ENCODE measurements at regions of chr2 and their contacts with region 1.

Region 1: DNA sequence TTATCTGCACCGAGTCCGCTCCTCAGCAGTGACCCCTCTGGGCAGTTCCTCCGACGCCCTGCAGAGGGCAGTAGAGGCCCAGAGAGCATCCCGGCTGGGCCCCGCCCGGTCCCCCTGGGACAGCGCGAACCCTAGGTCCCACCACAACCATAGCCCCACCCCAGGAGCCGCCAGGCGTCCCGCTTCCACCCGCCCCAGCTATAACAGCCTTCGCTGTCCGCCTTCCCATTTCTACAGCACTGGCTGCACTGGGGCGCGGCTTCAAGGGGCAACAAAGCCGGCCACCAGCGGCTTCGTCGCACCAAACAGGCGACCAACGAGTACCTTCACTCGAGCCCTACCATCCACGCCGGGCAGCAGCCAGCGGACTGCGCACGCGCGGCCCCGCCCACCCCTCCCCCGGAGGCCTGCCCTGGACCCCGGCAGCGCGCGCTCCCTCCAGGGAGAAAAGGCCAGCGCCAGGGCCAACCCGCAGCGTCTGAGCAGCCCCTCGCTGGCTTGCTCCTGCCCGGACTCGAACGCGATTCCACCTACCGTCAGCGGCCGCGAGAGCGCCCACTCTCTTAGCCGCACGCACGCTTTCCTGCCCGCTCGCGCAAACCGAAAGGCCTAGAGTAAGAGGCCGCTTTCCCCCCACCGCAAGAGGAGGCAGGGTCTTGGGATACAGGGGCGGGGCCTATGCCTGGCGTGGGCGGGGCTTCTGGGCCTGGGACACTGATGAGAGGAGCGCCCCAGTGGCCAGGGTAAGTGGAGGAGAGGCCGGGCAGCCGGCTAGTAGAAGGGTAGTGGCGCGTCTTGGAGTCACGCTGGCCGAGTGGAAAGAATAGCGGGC is at the start of gene NHEJ1:
- DNase-seq: peak; percentile 83 to 97 (median 92)
- ATAC-seq: peak; percentile 88
- H3K4me3 ChIP-seq: peak within 1 kb of the TSS; percentile 59 to 77
- H3K4me3 Mint-ChIP-seq: peak within 1 kb of the TSS; percentile 93
- H3K27ac ChIP-seq: peak within 1 kb of the TSS; percentile 60 to 69
- H3K27ac Mint-ChIP-seq: peak within 1 kb of the TSS; percentile 95
- H3K4me1 ChIP-seq: peaks cover 11% of the 10 kb centered on the region
- H3K4me1 Mint-ChIP-seq: peaks cover 16% of the 10 kb centered on the region
- H3K27me3 ChIP-seq: no peaks in the 10 kb centered on the region
- H3K27me3 Mint-ChIP-seq: no peaks in the 10 kb centered on the region
- CTCF ChIP-seq: peak; percentile 97
- total RNA-seq, gene NHEJ1: 7.2 to 8.1 TPM

Region 2: DNA sequence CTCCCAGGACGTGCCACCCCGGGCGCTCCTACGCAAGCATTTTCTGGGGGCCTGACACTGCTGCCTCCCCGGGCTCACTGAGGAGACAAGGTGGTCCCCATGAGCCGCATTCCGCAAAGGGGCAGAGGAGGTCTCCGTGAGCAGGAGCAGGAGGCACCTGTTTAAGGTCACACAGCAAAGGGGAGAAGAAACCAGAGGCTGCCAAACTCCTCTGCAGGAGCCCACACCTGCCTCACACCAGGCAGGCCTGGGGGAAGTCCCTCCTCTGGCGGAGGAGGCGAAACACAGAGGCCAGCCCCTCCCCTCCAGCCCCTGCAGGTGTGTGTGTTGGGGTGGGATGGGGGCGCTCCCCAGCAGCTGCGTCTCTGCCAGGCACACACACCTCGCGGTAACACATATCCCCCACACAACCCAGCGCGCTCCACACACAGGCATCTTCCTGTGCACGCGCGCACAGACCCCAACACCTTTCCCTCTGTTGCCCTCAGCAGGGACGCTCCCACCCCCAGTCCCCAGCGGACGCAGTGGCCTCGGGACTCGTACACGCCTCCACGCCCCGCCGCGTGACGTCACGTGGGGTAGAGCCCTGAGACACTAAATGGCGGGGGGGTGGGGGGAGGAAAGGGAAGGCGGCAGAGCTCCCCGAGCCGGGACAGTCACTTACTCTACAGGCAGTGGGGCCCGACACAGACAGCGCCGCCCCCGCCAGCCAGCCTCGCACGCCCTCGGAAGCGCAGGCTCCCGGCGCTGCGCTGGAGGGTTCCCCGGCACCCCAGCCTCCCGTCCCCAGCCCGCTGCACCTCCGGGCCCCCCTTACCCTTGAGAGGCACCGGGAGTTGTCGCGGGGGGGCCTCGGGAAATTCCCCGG is 280.3 kb before region 1 on chr2:
- CTCF ChIA-PET with region 1: no interaction called
- POLR2A ChIA-PET with region 1: no interaction called
- intact Hi-C with region 1: no loop called
- DNase-seq: peak; percentile 74 to 97 (median 88)
- ATAC-seq: peak; percentile 81
- H3K4me3 ChIP-seq: peak overlapping the region; percentile 53 to 61
- H3K4me3 Mint-ChIP-seq: peak overlapping the region; percentile 90
- H3K27ac ChIP-seq: peak overlapping the region; percentile 50 to 57
- H3K27ac Mint-ChIP-seq: peak overlapping the region; percentile 95
- H3K4me1 ChIP-seq: peaks cover 59% of the 10 kb centered on the region
- H3K4me1 Mint-ChIP-seq: peaks cover 51% of the 10 kb centered on the region
- H3K27me3 ChIP-seq: peaks cover 0 to 15% of the 10 kb centered on the region in 2 experiments
- H3K27me3 Mint-ChIP-seq: peaks cover 10% of the 10 kb centered on the region
- CTCF ChIP-seq: no peak

Region 3: DNA sequence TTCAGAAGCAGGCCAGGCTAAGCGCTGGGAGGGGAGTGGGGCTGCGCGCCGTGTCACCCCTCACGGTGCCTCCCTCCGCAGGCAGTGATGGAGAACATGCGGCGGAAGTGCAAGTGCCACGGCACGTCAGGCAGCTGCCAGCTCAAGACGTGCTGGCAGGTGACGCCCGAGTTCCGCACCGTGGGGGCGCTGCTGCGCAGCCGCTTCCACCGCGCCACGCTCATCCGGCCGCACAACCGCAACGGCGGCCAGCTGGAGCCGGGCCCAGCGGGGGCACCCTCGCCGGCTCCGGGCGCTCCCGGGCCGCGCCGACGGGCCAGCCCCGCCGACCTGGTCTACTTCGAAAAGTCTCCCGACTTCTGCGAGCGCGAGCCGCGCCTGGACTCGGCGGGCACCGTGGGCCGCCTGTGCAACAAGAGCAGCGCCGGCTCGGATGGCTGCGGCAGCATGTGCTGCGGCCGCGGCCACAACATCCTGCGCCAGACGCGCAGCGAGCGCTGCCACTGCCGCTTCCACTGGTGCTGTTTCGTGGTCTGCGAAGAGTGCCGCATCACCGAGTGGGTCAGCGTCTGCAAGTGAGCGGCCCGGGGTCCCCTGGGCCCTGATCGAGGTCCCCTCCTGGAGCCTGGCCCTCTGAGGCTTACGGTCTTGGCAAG is 267.6 kb before region 1 on chr2:
- CTCF ChIA-PET with region 1: no interaction called
- POLR2A ChIA-PET with region 1: no interaction called
- intact Hi-C with region 1: loop called in 1 of 2 experiments (anchors 5 kb)
- DNase-seq: peak; percentile 71 to 97 (median 85)
- ATAC-seq: peak; percentile 65
- H3K4me3 ChIP-seq: peak overlapping the region; percentile 36 to 51
- H3K4me3 Mint-ChIP-seq: peak overlapping the region; percentile 72
- H3K27ac ChIP-seq: peak overlapping the region; percentile 68 to 84
- H3K27ac Mint-ChIP-seq: peak overlapping the region; percentile 95
- H3K4me1 ChIP-seq: peaks cover 61% of the 10 kb centered on the region
- H3K4me1 Mint-ChIP-seq: peaks cover 44% of the 10 kb centered on the region
- H3K27me3 ChIP-seq: peaks cover 0 to 7% of the 10 kb centered on the region in 2 experiments
- H3K27me3 Mint-ChIP-seq: no peaks in the 10 kb centered on the region
- CTCF ChIP-seq: peak; percentile 67

Region 4: DNA sequence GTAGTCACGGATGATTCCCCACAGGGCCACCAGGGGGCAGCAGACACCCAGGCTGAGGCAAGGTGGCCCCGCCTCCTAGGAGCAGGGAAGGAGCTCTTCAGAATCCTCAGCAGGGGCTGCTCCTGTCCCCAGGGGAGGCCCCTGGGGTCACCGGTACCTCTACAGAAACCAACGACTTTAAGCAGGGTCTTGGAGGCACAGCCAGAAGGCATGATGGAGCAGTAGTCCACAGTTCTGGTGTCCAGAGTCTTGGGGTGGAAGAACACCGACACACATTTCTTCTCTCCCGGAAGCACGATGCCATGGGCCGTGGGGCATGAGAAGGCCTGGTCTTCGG is 130.6 kb before region 1 on chr2:
- CTCF ChIA-PET with region 1: interaction called, 92 read pairs
- POLR2A ChIA-PET with region 1: no interaction called
- intact Hi-C with region 1: loop called in 1 of 2 experiments (anchors 1 kb)
- DNase-seq: peak; percentile 45 to 83 (median 76)
- ATAC-seq: peak; percentile 94
- H3K4me3 ChIP-seq: no peak overlapping the region
- H3K4me3 Mint-ChIP-seq: no peak overlapping the region
- H3K27ac ChIP-seq: no peak overlapping the region
- H3K27ac Mint-ChIP-seq: no peak overlapping the region
- H3K4me1 ChIP-seq: no peaks in the 10 kb centered on the region
- H3K4me1 Mint-ChIP-seq: no peaks in the 10 kb centered on the region
- H3K27me3 ChIP-seq: peaks cover 0 to 4% of the 10 kb centered on the region in 2 experiments
- H3K27me3 Mint-ChIP-seq: peaks cover 21% of the 10 kb centered on the region
- CTCF ChIP-seq: peak; percentile 87

Region 5: DNA sequence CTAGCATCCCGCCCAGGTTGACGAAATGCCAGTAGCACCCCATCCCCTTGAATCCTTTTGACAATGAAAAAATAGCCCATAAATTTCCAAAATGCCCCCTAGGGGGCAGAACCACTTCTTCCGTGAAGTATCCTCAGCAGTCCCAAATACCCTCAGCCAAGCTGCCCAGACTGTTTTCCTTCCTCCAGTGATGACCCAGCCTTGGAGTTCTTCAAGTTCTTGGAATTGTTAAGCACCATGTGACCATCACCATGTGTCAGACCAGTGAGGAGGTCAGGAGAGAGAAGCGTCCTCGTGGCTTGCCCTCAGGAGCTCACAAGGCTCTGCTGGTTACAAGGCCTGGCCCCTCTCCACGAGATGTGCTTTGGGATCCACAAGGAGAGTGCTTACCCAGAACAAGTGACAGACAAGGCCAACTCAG is 10.8 kb after region 1 on chr2:
- CTCF ChIA-PET with region 1: interaction called, 101 read pairs
- POLR2A ChIA-PET with region 1: interaction called, 22 read pairs
- intact Hi-C with region 1: loop called (anchors 1 kb)
- DNase-seq: peak in 5 of 9 experiments; percentile 43 to 69 (median 55)
- ATAC-seq: peak; percentile 76
- H3K4me3 ChIP-seq: no peak overlapping the region
- H3K4me3 Mint-ChIP-seq: no peak overlapping the region
- H3K27ac ChIP-seq: peak overlapping the region in 1 of 2 experiments; percentile 13
- H3K27ac Mint-ChIP-seq: no peak overlapping the region
- H3K4me1 ChIP-seq: peaks cover 24% of the 10 kb centered on the region
- H3K4me1 Mint-ChIP-seq: peaks cover 28% of the 10 kb centered on the region
- H3K27me3 ChIP-seq: no peaks in the 10 kb centered on the region
- H3K27me3 Mint-ChIP-seq: no peaks in the 10 kb centered on the region
- CTCF ChIP-seq: peak; percentile 79

Region 6: DNA sequence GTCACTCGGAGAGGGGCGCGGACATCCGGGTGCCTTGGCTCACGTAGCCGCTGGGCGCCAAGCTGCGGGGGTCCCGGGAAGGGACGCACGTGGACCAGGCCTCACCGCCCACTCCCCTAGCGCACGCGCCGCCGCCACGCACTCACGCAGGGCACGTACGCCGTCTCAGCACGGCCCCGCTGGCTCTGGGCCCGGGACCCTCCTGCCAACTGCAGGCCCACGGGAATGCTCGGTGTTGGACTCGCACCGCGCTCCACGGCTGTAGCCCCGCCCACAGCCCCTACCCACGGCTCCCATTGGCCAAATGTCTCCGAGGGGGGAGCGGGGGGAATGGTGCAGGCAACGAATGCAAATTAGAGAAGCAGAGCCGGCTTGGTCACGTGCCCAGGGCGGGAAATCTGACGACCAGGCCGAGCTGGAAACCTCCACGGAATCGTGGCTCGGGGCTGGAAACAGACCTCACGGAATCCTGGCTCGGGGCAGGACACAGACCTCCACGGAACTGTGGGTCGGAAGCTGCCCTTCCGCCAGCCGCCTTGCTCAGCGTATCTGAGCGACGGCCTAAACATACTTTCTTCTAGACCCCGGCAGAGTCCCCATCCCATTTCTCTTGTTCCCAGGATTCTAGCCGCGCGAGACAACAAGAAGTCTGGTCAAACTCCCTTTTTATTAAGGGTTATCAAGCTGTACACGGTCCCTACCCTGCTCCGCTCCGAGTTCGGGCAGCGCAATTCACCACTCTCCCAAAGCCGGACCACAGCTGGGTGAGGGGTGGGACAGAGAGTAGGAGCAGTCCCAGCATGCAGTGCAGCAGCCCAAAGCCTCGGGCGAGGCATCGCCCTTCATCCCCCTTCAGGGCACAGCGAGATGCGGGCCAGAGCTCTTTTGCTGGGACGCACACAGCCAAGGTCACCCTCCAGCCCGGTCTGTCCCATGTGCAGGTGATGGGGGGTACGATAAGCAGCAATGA is 58.6 kb after region 1 on chr2 and contains the start of gene ABCB6:
- CTCF ChIA-PET with region 1: interaction called, 228 read pairs
- POLR2A ChIA-PET with region 1: interaction called, 5 read pairs
- intact Hi-C with region 1: loop called in 1 of 2 experiments (anchors 2 kb)
- DNase-seq: peak; percentile 59 to 92 (median 87)
- ATAC-seq: peak; percentile 91
- H3K4me3 ChIP-seq: peak within 1 kb of the TSS; percentile 50 to 87
- H3K4me3 Mint-ChIP-seq: peak within 1 kb of the TSS; percentile 82
- H3K27ac ChIP-seq: peak within 1 kb of the TSS; percentile 43 to 47
- H3K27ac Mint-ChIP-seq: peak within 1 kb of the TSS; percentile 72
- H3K4me1 ChIP-seq: peaks cover 23% of the 10 kb centered on the region
- H3K4me1 Mint-ChIP-seq: peaks cover 19% of the 10 kb centered on the region
- H3K27me3 ChIP-seq: no peaks in the 10 kb centered on the region
- H3K27me3 Mint-ChIP-seq: no peaks in the 10 kb centered on the region
- CTCF ChIP-seq: no peak
- total RNA-seq, gene ABCB6: 3.4 to 3.5 TPM

Region 7: DNA sequence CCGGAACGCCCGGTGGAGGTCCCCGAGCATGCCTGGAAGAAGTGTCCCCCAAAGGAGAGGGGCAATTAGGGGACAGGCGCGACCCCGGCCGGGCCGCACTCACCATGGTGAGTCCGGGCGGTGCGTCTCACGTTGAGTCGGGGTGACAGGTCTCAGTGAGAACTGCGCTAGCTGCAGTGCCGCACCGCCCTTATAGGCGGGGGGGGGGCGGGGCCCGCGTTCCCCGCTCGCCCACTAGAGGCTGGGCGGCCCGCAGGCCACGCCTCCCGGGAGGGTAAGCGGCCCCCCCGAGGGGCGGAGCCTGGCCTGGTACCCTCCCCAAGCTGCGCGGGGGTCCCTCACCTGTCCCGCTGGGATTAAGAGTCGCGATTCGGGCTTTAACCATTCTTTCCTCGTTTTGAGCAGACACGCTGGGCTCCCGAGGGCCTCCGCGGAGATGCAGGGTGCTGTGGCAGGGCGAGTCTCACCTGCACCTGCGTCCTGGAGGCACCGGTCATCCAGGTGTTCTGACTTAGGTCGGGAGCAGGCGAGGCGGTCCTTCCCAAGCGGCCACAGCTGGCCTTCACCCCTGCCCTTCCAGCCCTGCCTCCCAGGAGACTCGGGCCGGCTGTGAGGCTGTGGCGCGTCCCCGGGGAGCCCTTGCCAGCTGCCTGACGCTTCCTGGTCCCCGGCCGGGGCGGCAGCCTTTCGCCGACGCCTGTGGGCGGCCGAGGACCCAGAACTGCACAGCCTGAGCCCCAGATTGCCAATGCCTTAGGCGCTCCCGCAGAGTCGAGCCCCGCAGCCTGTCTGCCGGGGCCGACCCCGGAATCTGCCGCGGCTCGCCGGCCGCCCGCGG is 93.6 kb after region 1 on chr2 and contains the start of gene TUBA4A:
- CTCF ChIA-PET with region 1: interaction called, 6 read pairs
- POLR2A ChIA-PET with region 1: interaction called, 3 read pairs
- intact Hi-C with region 1: loop called in 1 of 2 experiments (anchors 1 kb)
- DNase-seq: peak; percentile 82 to 95 (median 91)
- ATAC-seq: peak; percentile 74
- H3K4me3 ChIP-seq: peak within 1 kb of the TSS; percentile 98 to 100
- H3K4me3 Mint-ChIP-seq: peak within 1 kb of the TSS; percentile 87
- H3K27ac ChIP-seq: peak within 1 kb of the TSS; percentile 81 to 93
- H3K27ac Mint-ChIP-seq: peak within 1 kb of the TSS; percentile 96
- H3K4me1 ChIP-seq: peaks cover 37% of the 10 kb centered on the region
- H3K4me1 Mint-ChIP-seq: peaks cover 46% of the 10 kb centered on the region
- H3K27me3 ChIP-seq: no peaks in the 10 kb centered on the region
- H3K27me3 Mint-ChIP-seq: no peaks in the 10 kb centered on the region
- CTCF ChIP-seq: no peak
- total RNA-seq, gene TUBA4A: 322 TPM

Region 8: DNA sequence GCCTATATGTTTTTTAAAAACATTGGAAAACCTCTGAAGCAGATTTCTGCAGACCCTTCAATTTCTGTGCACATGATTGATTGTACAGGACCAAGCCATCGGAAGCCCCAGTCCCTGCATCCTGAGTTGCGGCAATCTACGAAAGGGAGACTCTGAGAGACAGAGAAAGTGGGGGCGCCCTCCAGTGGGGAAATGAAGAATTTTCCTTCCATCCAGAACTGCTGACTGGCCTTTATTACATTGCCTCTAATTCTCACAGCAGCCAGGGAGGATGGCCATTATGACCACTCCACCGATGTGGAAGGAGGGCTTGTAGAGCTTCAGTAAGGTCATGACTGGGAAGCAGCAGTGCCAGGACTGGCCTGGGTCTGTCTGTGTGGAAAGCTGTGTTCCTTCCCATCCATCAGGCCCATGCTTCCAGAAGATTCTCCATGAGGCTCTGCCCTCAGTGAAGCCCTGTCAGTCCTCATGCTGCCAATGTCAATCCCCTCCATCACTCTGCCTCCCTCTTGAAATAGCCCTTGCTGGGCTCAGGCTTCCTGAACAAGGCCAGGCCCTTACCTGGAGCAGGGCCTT is 192.1 kb after region 1 on chr2:
- CTCF ChIA-PET with region 1: interaction called, 6 read pairs
- POLR2A ChIA-PET with region 1: no interaction called
- intact Hi-C with region 1: loop called (anchors 1 to 2 kb)
- DNase-seq: peak; percentile 42 to 74 (median 64)
- ATAC-seq: peak; percentile 84
- H3K4me3 ChIP-seq: no peak overlapping the region
- H3K4me3 Mint-ChIP-seq: no peak overlapping the region
- H3K27ac ChIP-seq: no peak overlapping the region
- H3K27ac Mint-ChIP-seq: no peak overlapping the region
- H3K4me1 ChIP-seq: no peaks in the 10 kb centered on the region
- H3K4me1 Mint-ChIP-seq: no peaks in the 10 kb centered on the region
- H3K27me3 ChIP-seq: no peaks in the 10 kb centered on the region
- H3K27me3 Mint-ChIP-seq: peaks cover 60% of the 10 kb centered on the region
- CTCF ChIP-seq: peak; percentile 69

Region 9: DNA sequence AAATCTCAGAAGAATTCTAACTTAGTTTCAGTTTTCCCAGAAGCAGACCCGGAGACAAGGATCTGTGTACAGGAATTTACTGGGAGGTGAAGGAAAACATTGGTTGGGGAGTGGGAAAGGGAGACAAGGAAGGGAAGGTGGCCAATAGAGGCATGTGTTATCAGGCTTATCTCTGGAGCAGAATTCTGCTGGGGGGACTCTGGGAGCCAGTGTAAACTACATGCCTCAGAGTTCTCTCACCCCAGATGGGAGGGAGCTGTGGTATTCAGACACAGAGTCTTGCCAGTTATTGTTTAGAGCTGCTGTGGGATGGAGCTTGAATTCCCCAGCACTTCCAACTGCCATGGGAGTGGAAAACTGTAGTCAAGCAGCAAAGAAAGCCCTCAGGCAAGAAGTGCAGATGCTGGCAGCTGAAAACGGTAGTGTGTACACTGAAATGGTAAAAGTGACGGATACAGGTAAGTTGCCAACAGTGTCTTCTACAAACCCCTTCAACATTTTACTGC is 208.3 kb after region 1 on chr2:
- CTCF ChIA-PET with region 1: no interaction called
- POLR2A ChIA-PET with region 1: no interaction called
- intact Hi-C with region 1: no loop called
- DNase-seq: no peak
- ATAC-seq: no peak
- H3K4me3 ChIP-seq: no peak overlapping the region
- H3K4me3 Mint-ChIP-seq: no peak overlapping the region
- H3K27ac ChIP-seq: no peak overlapping the region
- H3K27ac Mint-ChIP-seq: no peak overlapping the region
- H3K4me1 ChIP-seq: no peaks in the 10 kb centered on the region
- H3K4me1 Mint-ChIP-seq: no peaks in the 10 kb centered on the region
- H3K27me3 ChIP-seq: no peaks in the 10 kb centered on the region
- H3K27me3 Mint-ChIP-seq: no peaks in the 10 kb centered on the region
- CTCF ChIP-seq: no peak

Measured in CD8-positive, alpha-beta T cell (primary cell).